ENCODE measurements at regions of chr1 and their contacts with region 1.

Region 1: GRCh38 chr1:16204634-16205337 is 7.7 kb downstream of the ARHGEF19 start:
- DNase-seq: peak in 3 of 6 donors; percentile 29 to 75 (median 70)
- ATAC-seq: peak in 1 of 4 donors; percentile 19
- H3K4me3 ChIP-seq: no peak overlapping the region
- H3K27ac ChIP-seq: no peak overlapping the region
- H3K4me1 ChIP-seq: peaks cover 0 to 11% (median 0%) of the 10 kb centered on the region in 3 donors
- H3K27me3 ChIP-seq: no peaks in the 10 kb centered on the region
- CTCF ChIP-seq: no peak

Region 2: DNA sequence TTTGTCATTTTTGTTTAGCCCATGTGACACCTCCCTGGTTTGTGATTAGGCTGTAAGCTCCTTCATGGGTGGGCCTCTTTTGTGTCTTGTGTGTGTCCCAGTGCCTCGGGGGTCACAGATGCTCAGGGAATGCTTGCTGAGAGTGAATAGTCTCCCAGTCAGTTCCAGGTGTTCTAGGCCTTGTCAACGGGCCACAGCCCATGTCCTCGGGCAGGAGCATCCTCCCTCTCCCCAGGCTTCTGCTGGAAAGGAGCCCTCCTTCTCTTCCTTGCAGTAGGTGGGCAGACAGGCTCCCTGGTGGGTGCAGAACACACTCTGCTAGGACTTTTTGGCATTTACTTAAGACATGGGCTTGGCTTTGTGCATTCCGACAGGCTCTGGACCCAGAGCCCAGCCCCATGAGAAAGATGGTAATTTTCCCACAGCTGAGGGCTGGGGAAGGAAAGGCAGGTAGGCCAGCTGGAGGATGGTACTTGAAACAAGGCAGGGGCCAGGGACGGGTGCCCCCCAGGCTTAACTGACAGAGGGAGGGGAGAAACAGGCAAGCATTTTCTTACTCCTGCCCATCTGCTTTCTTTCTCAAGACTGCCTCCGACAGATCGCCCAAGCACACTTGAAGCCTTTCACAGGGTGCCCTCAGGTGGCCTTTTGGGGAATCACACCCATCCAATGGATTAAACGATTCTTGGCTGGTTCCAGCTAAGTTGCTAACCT is 39.3 kb after region 1 on chr1:
- intact Hi-C with region 1: loop called in 1 of 3 experiments (anchors 5 kb)
- DNase-seq: peak; percentile 75 to 90 (median 84)
- ATAC-seq: peak; percentile 44 to 78 (median 72)
- H3K4me3 ChIP-seq: no peak overlapping the region
- H3K27ac ChIP-seq: peak overlapping the region in 2 of 4 donors; percentile 9 to 28
- H3K4me1 ChIP-seq: peaks cover 21 to 30% (median 23%) of the 10 kb centered on the region in 3 donors
- H3K27me3 ChIP-seq: no peaks in the 10 kb centered on the region
- CTCF ChIP-seq: peak; percentile 76 to 87 (median 80)

Region 3: DNA sequence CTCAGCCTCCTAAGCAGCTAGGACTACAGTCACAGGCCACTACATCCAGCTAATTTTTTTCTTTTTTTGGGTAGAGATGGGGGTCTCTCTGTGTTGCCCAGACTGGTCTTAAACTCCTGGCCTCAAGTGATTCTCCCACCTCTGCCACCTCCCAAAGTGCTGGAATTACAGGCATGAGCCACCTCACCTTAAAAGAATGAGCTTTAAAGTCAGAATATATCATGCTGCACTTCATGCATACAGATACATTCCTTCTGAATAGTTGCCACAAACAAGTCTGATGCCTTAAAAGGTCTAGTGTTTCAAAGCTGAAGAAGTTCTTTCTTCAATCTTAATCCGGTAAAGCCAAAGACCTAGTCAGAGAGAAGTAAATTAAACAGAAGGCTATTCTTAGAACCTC is 56.0 kb after region 1 on chr1:
- intact Hi-C with region 1: no loop called
- DNase-seq: no peak
- ATAC-seq: no peak
- H3K4me3 ChIP-seq: no peak overlapping the region
- H3K27ac ChIP-seq: no peak overlapping the region
- H3K4me1 ChIP-seq: peaks cover 0 to 5% (median 0%) of the 10 kb centered on the region in 3 donors
- H3K27me3 ChIP-seq: no peaks in the 10 kb centered on the region
- CTCF ChIP-seq: no peak